Stomach (tissue), 19 donors: ENCODE measurements at regions of chr1 and their contacts with region 1.

Region 1: GRCh38 chr1:44792783-44793714 is 5.1 kb upstream of the BEST4 start:
- DNase-seq: peak in 1 of 2 donors; percentile 26
- H3K4me3 ChIP-seq: no peak overlapping the region
- H3K27ac ChIP-seq: no peak overlapping the region
- H3K4me1 ChIP-seq: no peaks in the 10 kb centered on the region
- H3K27me3 ChIP-seq: no peaks in the 10 kb centered on the region
- CTCF ChIP-seq: no peak
- EP300 ChIP-seq: no peak
- POLR2A ChIP-seq: no peak

Region 2: GRCh38 chr1:44835738-44836675 is 43.0 kb after region 1 on chr1:
- intact Hi-C with region 1: loop called (anchors 5 kb)
- DNase-seq: peak; percentile 88 to 94
- H3K4me3 ChIP-seq: no peak overlapping the region
- H3K27ac ChIP-seq: no peak overlapping the region
- H3K4me1 ChIP-seq: peaks cover 0 to 5% (median 0%) of the 10 kb centered on the region in 4 donors
- H3K27me3 ChIP-seq: no peaks in the 10 kb centered on the region
- CTCF ChIP-seq: peak in 5 of 7 experiments; percentile 56 to 85 (median 76)
- EP300 ChIP-seq: no peak
- POLR2A ChIP-seq: no peak

Region 3: GRCh38 chr1:44903011-44903680 is 110.1 kb after region 1 on chr1:
- intact Hi-C with region 1: no loop called
- DNase-seq: peak in 1 of 2 donors; percentile 81
- H3K4me3 ChIP-seq: no peak overlapping the region
- H3K27ac ChIP-seq: no peak overlapping the region
- H3K4me1 ChIP-seq: no peaks in the 10 kb centered on the region
- H3K27me3 ChIP-seq: no peaks in the 10 kb centered on the region
- CTCF ChIP-seq: no peak
- EP300 ChIP-seq: no peak
- POLR2A ChIP-seq: no peak